PC-3 (cell line): ENCODE measurements at regions of chr10 and their contacts with region 1.

Region 1: GRCh38 chr10:24469990-24470389 is 253.7 kb downstream of the ARHGAP21 start:
- DNase-seq: peak; percentile 89
- ATAC-seq: peak; percentile 74
- H3K4me3 ChIP-seq: peak overlapping the region; percentile 41; the same call in 1 of the 2 replicates
- H3K27ac ChIP-seq: peak overlapping the region; percentile 79
- H3K4me1 ChIP-seq: peaks cover 41% of the 10 kb centered on the region
- H3K27me3 ChIP-seq: no peaks in the 10 kb centered on the region
- CTCF ChIP-seq: no peak

Region 2: DNA sequence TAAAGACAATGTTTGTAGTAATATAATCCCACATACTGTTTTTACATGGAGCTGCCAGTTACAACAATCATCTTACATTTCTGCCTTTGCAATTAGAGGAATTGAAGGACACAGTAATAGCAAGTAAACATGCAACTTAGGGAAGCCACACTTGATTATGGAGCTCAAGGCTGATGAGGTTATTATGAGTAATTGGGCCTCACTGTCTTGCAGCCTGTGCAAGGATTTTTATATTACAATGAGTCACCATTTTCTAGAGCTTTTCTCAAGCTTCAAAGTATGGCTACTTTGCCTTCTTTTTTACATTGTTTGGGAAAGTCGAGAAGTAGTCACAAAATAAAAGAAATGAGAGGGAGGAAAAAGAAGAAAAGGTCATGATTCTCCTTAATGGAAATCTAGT is 34.6 kb before region 1 on chr10:
- CTCF ChIA-PET with region 1: no interaction called
- POLR2A ChIA-PET with region 1: no interaction called
- intact Hi-C with region 1: loop called (anchors 1 kb)
- DNase-seq: peak; percentile 78
- ATAC-seq: peak; percentile 96
- H3K4me3 ChIP-seq: no peak overlapping the region
- H3K27ac ChIP-seq: peak overlapping the region; percentile 89
- H3K4me1 ChIP-seq: peaks cover 26% of the 10 kb centered on the region
- H3K27me3 ChIP-seq: no peaks in the 10 kb centered on the region
- CTCF ChIP-seq: no peak

Region 3: GRCh38 chr10:24483489-24484100 is 13.6 kb after region 1 on chr10:
- CTCF ChIA-PET with region 1: interaction called, 3 read pairs
- POLR2A ChIA-PET with region 1: interaction called, 6 read pairs
- intact Hi-C with region 1: loop called (anchors 1 kb)
- DNase-seq: peak; percentile 91
- ATAC-seq: peak; percentile 100
- H3K4me3 ChIP-seq: peak overlapping the region; percentile 3; the same call in 1 of the 2 replicates
- H3K27ac ChIP-seq: peak overlapping the region; percentile 79
- H3K4me1 ChIP-seq: peaks cover 13% of the 10 kb centered on the region
- H3K27me3 ChIP-seq: no peaks in the 10 kb centered on the region
- CTCF ChIP-seq: no peak